Activated CD4-positive, alpha-beta T cell treated with anti-CD3 and anti-CD28 coated beads, Interleukin-2, amount 10 ng/mL, durations not matched to agents 24 days and 14 days (primary cell): ENCODE measurements at regions of chr13 and their contacts with region 1.

Region 1: GRCh38 chr13:112102243-112102642 is 35.3 kb downstream of the SOX1 start:
- DNase-seq: no peak
- H3K4me3 Mint-ChIP-seq: no peak overlapping the region
- H3K27ac Mint-ChIP-seq: no peak overlapping the region
- H3K4me1 Mint-ChIP-seq: no peaks in the 10 kb centered on the region
- H3K27me3 Mint-ChIP-seq: peaks cover 48% of the 10 kb centered on the region

Region 2: DNA sequence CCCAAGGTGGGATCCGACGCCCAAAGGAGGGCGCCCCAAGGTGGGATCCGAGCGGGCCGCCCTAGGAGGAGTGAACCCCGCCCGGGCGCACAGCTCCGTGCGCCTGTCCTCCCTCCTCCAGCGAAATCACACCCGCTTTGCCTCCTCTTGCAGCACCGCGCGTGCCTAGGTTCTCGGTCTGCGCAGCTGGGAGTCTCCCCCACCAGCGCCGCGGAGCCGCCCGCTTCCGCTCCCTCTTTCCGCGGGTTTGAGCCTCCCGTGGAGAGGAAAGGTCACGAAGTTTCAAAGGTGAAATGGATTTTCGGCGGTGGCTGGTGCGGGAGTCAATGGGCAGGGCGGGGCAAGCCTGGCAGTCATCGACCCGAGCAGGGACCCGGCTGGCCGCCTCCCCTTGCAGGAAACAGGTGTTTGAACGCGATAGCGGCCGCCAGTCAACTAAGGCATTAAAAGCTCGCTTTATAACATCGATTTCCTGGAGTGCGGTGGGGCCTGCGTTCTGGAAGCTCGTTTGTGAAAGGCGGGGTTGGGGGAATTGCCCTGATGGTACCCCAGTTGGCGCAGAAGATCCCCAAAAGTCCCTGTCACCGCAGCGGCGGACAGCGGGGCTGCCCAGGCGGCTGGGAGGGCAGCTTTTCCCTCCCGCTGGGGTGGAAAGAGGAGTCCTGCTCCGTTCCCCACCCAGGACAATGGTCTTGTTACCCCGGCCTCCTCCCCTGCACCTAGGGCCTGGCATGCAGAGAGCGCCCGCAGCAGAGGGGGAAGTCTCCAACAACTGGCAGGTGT is 44.3 kb before region 1 on chr13:
- intact Hi-C with region 1: loop called (anchors 10 kb)
- DNase-seq: peak; percentile 58
- H3K4me3 Mint-ChIP-seq: no peak overlapping the region
- H3K27ac Mint-ChIP-seq: no peak overlapping the region
- H3K4me1 Mint-ChIP-seq: peaks cover 2% of the 10 kb centered on the region
- H3K27me3 Mint-ChIP-seq: peaks cover 68% of the 10 kb centered on the region